ENCODE measurements at regions of chr7 and their contacts with region 1.

Region 1: GRCh38 chr7:20598459-20599309 is 16.8 kb upstream of the ABCB5 start:
- DNase-seq: no peak
- H3K4me3 Mint-ChIP-seq: no peak overlapping the region
- H3K27ac Mint-ChIP-seq: no peak overlapping the region
- H3K4me1 Mint-ChIP-seq: no peaks in the 10 kb centered on the region
- H3K27me3 Mint-ChIP-seq: peaks cover 12% of the 10 kb centered on the region

Region 2: DNA sequence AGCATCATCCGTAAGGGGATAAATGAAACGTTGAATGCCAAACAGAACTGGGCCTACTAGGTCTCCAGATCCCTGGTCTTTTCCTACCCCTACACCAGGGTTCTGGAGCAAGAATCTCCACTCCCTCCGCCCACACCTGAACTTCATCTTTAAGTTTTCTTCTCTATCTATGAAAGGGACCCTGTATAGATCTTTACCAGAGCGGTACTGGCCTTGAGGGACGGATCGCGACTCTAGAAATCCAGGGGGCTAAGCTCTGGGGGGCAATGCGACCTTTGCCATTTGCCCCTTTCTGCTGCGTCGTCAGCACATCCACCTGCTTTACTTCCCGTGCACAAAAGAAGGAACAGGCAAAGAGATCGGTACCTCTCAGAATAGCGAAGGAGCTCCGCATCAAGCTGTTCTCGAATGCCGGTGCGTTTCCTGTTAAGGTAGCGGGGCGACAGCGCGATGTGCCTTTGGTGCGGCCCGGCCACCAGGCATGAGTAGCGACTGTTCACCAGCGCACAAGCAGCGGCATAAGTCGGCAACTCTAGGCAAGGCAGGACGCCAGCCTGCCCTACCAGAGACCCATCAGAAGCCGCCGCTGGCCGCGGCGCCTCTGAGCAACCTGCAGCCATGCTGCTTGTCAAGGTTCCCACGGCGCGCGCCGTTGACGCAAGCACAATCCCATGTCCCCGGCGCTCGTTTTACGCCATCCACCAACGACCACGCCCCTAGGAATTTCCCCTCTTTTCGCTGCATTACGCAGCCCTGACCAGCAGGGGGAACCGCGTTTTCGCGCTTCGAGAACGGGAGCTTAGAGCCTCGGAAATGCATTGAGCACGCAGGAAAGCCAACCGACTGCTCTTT is 890.1 kb before region 1 on chr7 and contains the start of gene POLR1F:
- CTCF ChIA-PET with region 1: interaction called, 219 read pairs
- POLR2A ChIA-PET with region 1: no interaction called
- intact Hi-C with region 1: loop called (anchors 1 kb)
- DNase-seq: peak; percentile 96
- H3K4me3 Mint-ChIP-seq: peak within 1 kb of the TSS; percentile 81
- H3K27ac Mint-ChIP-seq: peak within 1 kb of the TSS; percentile 78
- H3K4me1 Mint-ChIP-seq: peaks cover 37% of the 10 kb centered on the region
- H3K27me3 Mint-ChIP-seq: peaks cover 3% of the 10 kb centered on the region
- total RNA-seq, gene POLR1F: 20.0 to 21.9 TPM

Region 3: GRCh38 chr7:19747740-19748339 is 850.8 kb before region 1 on chr7:
- CTCF ChIA-PET with region 1: interaction called, 36 read pairs
- POLR2A ChIA-PET with region 1: no interaction called
- intact Hi-C with region 1: loop called (anchors 1 kb)
- DNase-seq: no peak
- H3K4me3 Mint-ChIP-seq: no peak overlapping the region
- H3K27ac Mint-ChIP-seq: no peak overlapping the region
- H3K4me1 Mint-ChIP-seq: no peaks in the 10 kb centered on the region
- H3K27me3 Mint-ChIP-seq: peaks cover 5% of the 10 kb centered on the region

Region 4: DNA sequence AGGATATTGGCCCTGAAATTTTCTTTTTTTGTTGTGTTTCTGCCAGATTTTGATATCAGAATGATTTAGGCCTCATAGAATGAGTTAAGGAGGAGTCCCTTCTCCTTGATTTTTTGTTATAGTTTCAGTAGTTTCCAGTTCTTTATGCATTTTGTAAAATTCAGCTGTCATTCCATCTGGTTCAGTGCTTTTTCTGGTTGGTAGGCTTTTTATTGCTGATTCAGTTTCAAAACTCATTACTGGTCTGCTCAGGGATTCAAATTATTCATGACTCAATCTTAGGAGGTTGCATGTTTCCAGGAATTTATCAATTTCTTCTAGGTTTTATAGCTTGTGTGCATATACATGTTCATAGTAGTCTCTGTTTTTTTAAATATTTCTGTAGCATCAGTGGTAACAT is 815.1 kb before region 1 on chr7:
- CTCF ChIA-PET with region 1: no interaction called
- POLR2A ChIA-PET with region 1: no interaction called
- intact Hi-C with region 1: no loop called
- DNase-seq: no peak
- H3K4me3 Mint-ChIP-seq: no peak overlapping the region
- H3K27ac Mint-ChIP-seq: no peak overlapping the region
- H3K4me1 Mint-ChIP-seq: no peaks in the 10 kb centered on the region
- H3K27me3 Mint-ChIP-seq: peaks cover 3% of the 10 kb centered on the region

Region 5: GRCh38 chr7:21243265-21243664 is 644.6 kb after region 1 on chr7:
- CTCF ChIA-PET with region 1: no interaction called
- POLR2A ChIA-PET with region 1: no interaction called
- intact Hi-C with region 1: no loop called
- DNase-seq: no peak
- H3K4me3 Mint-ChIP-seq: no peak overlapping the region
- H3K27ac Mint-ChIP-seq: no peak overlapping the region
- H3K4me1 Mint-ChIP-seq: no peaks in the 10 kb centered on the region
- H3K27me3 Mint-ChIP-seq: peaks cover 22% of the 10 kb centered on the region